ENCODE measurements at regions of chr4 and their contacts with region 1.

Region 1: GRCh38 chr4:78938868-78939666 is at the start of gene PAQR3:
- DNase-seq: peak; percentile 94
- H3K4me3 ChIP-seq: peak within 1 kb of the TSS; percentile 94
- H3K27ac ChIP-seq: peak within 1 kb of the TSS; percentile 65
- H3K4me1 ChIP-seq: peaks cover 17% of the 10 kb centered on the region
- H3K27me3 ChIP-seq: 0 out of 2 replicates have a peak, but pooled peaks cover 5% of the 10 kb centered on the region
- total RNA-seq, gene PAQR3: 19.2 and 20.7 TPM in 2 replicates

Region 2: GRCh38 chr4:78818530-78819079 is 120.5 kb before region 1 on chr4:
- in situ Hi-C with region 1: no loop called
- DNase-seq: no peak
- H3K4me3 ChIP-seq: no peak overlapping the region
- H3K27ac ChIP-seq: no peak overlapping the region
- H3K4me1 ChIP-seq: no peaks in the 10 kb centered on the region
- H3K27me3 ChIP-seq: no peaks in the 10 kb centered on the region

Region 3: DNA sequence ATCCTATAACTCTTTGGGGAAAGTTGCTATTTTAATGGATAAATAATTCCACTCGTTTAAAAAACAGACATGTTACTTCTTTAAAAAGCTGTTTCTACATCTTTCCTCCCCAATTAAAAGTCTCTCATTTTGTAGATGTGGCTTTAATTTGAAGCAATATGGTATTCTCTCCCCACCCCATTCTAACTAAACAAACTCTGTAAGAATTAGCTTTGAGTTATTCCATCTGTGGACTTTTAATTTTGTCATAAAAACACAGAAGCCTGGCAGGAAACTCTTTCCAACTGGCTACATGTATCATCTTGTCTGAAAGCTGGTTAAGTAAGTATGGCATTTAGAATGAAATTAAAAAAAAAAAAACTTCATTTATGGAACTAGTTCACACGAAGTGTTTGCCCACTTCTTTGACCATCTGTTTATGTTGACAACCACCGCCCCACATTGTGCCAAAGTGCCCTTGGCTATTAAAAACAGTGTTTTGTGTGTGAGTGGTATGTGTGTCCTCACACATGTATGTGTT is 246.5 kb after region 1 on chr4:
- in situ Hi-C with region 1: no loop called
- DNase-seq: no peak
- H3K4me3 ChIP-seq: no peak overlapping the region
- H3K27ac ChIP-seq: no peak overlapping the region
- H3K4me1 ChIP-seq: no peaks in the 10 kb centered on the region
- H3K27me3 ChIP-seq: no peaks in the 10 kb centered on the region

Region 4: DNA sequence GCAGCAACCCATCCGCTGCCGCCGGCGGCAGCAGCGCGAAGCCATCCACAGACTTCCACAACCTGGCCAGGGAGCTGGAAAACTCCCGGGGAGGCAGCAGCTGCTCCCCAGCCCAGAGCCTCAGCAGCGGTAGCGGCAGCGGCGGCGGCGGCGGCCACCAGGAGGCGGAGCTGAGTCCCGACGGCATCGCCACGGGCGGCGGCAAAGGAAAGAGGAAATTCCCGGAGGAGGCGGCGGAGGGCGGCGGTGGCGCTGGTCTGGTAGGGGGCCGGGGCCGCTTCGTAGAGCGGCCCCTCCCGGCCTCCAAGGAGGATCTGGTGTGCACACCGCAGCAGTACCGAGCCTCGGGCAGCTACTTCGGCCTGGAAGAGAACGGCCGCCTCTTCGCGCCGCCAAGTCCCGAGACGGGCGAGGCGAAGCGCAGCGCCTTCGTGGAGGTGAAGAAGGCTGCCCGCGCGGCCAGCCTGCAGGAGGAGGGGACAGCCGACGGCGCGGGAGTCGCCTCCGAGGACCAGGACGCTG is 1263.2 kb after region 1 on chr4:
- in situ Hi-C with region 1: loop called (anchors 25 kb)
- DNase-seq: peak; percentile 91
- H3K4me3 ChIP-seq: peak overlapping the region; percentile 70
- H3K27ac ChIP-seq: 0 out of 2 replicates have a peak overlapping the region, but pooled peaks have one; percentile 13
- H3K4me1 ChIP-seq: peaks cover 3% of the 10 kb centered on the region; the same call in 1 of the 2 replicates
- H3K27me3 ChIP-seq: no peaks in the 10 kb centered on the region

Region 5: DNA sequence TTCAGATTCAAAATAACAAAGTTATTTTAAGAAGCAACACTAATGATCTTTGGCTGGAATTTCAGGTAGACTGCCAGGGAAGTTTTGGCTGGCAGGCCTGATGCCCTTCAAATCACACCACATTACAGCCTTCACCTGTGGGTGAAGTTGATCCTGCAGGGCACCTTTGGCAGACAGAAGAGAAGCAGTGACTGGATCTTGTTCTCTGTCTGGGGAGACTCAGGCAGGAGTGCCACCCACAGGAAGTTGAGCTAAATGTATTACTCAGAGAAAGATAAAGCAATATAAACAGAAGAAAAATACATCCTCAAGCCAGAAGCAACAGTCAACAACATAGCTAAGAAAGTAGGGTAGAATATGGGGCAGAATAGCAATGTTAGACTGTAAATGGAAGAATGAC is 1383.6 kb after region 1 on chr4:
- in situ Hi-C with region 1: loop called (anchors 25 kb)
- DNase-seq: peak; percentile 79
- H3K4me3 ChIP-seq: no peak overlapping the region
- H3K27ac ChIP-seq: no peak overlapping the region
- H3K4me1 ChIP-seq: peaks cover 20% of the 10 kb centered on the region
- H3K27me3 ChIP-seq: no peaks in the 10 kb centered on the region